PC-9 (cell line): ENCODE measurements at regions of chr3 and their contacts with region 1.

Region 1: GRCh38 chr3:108489771-108490170 is 20.6 kb downstream of the MYH15 start:
- DNase-seq: peak; percentile 31 to 51
- H3K4me3 ChIP-seq: no peak overlapping the region
- H3K27ac ChIP-seq: no peak overlapping the region
- H3K4me1 ChIP-seq: no peaks in the 10 kb centered on the region
- H3K27me3 ChIP-seq: no peaks in the 10 kb centered on the region
- CTCF ChIP-seq: peak; percentile 97

Region 2: DNA sequence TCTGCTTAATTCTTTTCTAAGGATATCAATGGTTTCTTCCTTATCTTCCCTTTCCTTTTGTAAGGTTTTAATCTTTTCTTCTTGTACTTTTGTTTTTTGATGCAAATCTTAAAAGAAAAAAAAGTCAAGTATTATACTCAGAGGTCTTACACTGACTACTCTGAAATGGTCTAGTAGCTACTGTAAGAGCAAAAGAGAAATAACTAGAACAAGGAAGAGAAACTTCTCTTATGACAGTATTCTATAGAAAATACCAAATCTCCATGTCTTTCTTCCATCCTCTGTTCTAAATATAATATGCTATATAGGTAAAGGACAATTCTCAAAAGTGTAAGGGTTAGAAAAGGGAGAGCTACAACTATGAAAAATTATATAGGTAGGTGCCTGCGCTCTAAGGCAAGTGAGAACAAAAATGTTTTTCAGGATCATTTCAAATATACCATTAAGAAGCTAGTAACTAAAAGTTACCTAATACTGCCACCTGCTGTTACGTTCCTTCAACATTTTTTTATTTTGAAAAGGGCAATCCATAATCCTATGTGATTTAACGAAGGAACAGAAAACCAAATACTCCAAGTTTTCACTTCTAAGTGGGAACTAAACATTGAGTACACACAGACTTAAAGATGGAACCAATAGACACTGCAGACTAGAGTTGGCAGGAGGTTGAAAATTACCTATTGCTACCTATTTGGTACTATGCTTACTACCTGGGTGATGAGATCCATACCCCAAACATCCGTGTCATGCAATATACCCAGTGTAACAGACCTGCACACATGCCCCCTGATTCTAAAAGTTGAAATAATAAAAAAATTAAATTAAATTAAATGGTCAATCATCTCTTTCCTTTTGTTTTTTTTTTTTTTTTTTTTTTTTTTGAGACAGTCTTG is 62.7 kb after region 1 on chr3:
- CTCF ChIA-PET with region 1: no interaction called
- POLR2A ChIA-PET with region 1: no interaction called
- intact Hi-C with region 1: loop called (anchors 1 kb)
- DNase-seq: peak in 1 of 2 experiments; percentile 63
- H3K4me3 ChIP-seq: no peak overlapping the region
- H3K27ac ChIP-seq: no peak overlapping the region
- H3K4me1 ChIP-seq: no peaks in the 10 kb centered on the region
- H3K27me3 ChIP-seq: no peaks in the 10 kb centered on the region
- CTCF ChIP-seq: peak; percentile 90

Region 3: DNA sequence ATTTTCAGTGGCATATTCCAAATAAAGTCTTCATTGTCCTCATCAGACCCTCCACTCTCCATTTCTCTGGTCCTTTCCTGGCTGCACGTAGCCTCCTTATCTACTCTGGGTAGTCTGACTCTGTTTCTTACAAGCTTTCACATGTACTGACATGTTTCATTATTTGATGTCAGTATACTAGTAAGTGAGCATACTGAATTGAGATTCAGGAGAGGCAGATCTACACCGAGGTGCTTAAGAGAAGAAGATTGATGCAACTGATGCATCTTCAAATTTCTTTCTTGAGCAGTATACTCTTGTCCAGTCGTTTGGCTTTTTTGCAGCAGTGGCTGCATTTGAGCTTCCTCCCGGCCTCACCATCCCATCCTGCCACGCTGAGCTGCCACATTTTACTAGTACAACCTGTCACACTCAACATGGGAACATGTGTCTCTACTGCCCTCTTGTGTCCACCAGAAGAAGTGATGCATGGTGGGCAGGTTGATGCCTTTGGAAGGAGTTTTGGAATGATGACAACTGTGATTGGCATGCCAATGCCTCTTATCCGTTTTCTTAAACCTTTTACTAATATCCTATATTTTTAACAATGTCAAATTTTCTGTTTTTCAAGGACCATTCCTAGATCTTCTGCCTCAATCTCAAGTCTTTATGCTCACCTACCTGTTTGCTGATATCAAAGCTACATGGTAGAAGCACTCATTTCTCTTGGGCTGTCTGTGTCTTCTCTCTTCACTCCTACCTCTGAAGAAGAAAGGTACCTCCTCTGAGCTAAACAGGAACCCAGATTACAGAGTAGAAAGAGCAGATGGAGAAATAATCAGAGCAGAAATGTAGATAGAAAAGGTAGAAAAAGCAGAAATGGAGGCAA is 425.2 kb after region 1 on chr3:
- CTCF ChIA-PET with region 1: no interaction called
- POLR2A ChIA-PET with region 1: no interaction called
- intact Hi-C with region 1: loop called (anchors 1 kb)
- DNase-seq: peak; percentile 54 to 61
- H3K4me3 ChIP-seq: no peak overlapping the region
- H3K27ac ChIP-seq: no peak overlapping the region
- H3K4me1 ChIP-seq: peaks cover 6% of the 10 kb centered on the region; the same call in 1 of the 2 replicates
- H3K27me3 ChIP-seq: no peaks in the 10 kb centered on the region
- CTCF ChIP-seq: peak; percentile 99

Region 4: GRCh38 chr3:109081746-109082510 is 592.2 kb after region 1 on chr3:
- CTCF ChIA-PET with region 1: no interaction called
- POLR2A ChIA-PET with region 1: no interaction called
- intact Hi-C with region 1: loop called (anchors 5 kb)
- DNase-seq: peak; percentile 41 to 45
- H3K4me3 ChIP-seq: no peak overlapping the region
- H3K27ac ChIP-seq: no peak overlapping the region
- H3K4me1 ChIP-seq: no peaks in the 10 kb centered on the region
- H3K27me3 ChIP-seq: no peaks in the 10 kb centered on the region
- CTCF ChIP-seq: peak; percentile 95